MCF 10A (cell line): ENCODE measurements at regions of chr14 and their contacts with region 1.

Region 1: GRCh38 chr14:49620182-49621113 is at the starts of genes MGAT2 and RPL36AL:
- DNase-seq: peak; percentile 98
- H3K4me3 Mint-ChIP-seq: peak within 1 kb of the TSS; percentile 99
- H3K27ac Mint-ChIP-seq: peak within 1 kb of the TSS; percentile 99
- H3K4me1 Mint-ChIP-seq: peaks cover 28% of the 10 kb centered on the region
- H3K27me3 Mint-ChIP-seq: no peaks in the 10 kb centered on the region
- CTCF ChIP-seq: peak; percentile 14
- total RNA-seq, gene MGAT2: 43.8 and 44.3 TPM in 2 replicates
- total RNA-seq, gene RPL36AL: 257 and 299 TPM in 2 replicates

Region 2: GRCh38 chr14:49585803-49586672 is 34.4 kb before region 1 on chr14 and contains the start of gene RPS29:
- CTCF ChIA-PET with region 1: interaction called, 13 read pairs
- POLR2A ChIA-PET with region 1: interaction called, 179 read pairs
- intact Hi-C with region 1: loop called (anchors 1 kb)
- DNase-seq: peak; percentile 99
- H3K4me3 Mint-ChIP-seq: peak within 1 kb of the TSS; percentile 81
- H3K27ac Mint-ChIP-seq: peak within 1 kb of the TSS; percentile 98
- H3K4me1 Mint-ChIP-seq: peaks cover 19% of the 10 kb centered on the region
- H3K27me3 Mint-ChIP-seq: no peaks in the 10 kb centered on the region
- CTCF ChIP-seq: no peak
- total RNA-seq, gene RPS29: 1,499 and 1,837 TPM in 2 replicates